Right ventricle myocardium inferior (tissue), 1 donor: ENCODE measurements at regions of chr6 and their contacts with region 1.

Region 1: GRCh38 chr6:14210663-14211561 is 93.3 kb downstream of the CD83 start:
- DNase-seq: peak; percentile 96
- ATAC-seq: peak; percentile 96

Region 2: DNA sequence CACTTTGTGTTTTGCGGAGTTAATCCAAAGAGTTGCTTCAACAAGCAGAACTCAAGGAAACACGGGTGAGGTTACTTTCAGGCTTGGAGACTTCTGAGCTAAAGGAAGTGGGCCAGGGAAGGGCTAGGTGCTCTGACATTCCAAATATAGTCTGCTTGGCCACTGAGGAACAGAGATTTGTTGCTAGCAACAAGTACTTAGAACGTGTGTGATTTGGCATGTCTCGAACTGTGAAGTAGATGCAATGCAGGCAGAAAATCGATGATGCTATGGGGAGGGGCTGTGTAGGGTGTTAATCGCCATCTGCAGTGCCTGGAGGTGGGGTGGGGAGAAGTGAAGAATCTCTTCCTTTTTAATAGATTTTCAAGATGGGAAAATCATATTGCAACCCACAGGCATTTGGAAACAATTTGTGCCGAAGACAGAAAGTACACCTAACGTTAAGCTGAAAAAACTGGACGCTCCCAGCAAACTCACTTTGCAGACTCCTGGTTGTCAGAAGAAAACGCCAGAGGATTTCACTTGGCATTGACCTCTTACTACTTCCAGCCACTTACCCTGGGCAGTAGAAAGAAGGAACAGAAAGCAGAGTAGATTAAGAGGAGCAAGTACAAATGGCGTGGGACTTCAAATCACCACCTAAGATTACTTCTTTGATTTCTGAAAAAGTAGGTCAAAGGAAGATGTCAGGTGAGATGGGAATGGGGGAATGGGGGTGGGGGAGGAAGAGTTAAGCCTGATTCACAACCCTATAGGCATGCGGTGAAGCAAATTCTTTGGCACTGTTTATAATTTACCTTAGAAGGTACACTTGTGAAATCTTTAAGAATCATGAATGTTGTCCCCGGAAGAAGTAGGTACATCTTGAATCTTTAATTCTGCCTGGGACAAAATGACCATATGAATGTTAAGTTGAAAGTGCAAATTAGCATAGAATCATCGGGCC is 220.7 kb after region 1 on chr6:
- intact Hi-C with region 1: loop called (anchors 2 kb)
- DNase-seq: no peak
- ATAC-seq: peak; percentile 91

Region 3: DNA sequence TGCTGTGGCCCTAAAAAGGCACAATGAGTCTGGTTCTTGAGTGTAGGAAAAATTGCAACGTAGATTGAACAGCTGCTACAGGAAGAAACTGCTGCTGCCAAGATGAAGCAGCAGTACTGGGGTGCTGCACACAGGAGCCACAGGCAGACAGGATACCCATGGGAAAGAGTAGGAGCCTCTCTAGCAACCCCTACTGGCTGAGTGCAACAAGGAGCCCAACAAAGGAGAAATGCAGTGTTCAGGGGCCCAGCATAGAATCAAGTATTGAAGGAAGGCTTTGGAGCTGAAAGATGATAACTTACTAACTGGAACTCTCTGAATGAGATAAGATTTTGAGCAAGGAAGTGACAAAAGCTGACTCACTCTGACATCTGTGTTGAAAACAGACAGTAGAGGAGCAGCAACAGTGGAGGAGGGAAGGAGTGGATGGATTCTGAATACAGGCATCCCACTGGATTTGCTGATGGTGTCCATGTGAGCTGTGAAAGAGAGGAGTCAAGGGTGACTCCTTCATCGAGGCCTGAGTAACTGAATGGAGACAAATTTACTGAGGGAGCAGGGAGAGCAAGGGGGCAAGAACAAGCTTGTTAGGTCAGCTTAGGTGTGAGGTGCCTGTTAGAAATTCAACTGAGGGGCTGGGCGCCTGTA is 500.3 kb after region 1 on chr6:
- intact Hi-C with region 1: loop called (anchors 5 kb)
- DNase-seq: no peak
- ATAC-seq: no peak

Region 4: DNA sequence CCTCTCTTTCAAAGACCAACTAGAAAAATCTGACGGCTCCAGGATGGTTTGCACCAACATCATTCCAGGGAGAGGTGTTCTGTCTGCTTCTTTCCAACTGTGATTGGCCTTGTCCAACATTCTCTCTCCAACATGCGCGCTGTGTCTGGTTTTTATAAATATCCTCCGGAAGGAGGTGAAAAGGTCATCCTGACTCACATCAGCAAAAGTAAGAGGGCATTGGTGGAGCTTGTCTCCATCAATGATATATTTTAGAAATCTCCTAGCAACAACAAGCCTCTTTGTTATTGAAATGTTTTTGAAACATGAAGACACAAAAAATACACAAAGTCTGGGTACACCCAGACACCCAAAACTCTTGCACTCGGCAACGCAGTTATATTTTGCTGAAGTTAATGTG is 559.7 kb after region 1 on chr6:
- intact Hi-C with region 1: no loop called
- DNase-seq: no peak
- ATAC-seq: peak; percentile 68

Region 5: DNA sequence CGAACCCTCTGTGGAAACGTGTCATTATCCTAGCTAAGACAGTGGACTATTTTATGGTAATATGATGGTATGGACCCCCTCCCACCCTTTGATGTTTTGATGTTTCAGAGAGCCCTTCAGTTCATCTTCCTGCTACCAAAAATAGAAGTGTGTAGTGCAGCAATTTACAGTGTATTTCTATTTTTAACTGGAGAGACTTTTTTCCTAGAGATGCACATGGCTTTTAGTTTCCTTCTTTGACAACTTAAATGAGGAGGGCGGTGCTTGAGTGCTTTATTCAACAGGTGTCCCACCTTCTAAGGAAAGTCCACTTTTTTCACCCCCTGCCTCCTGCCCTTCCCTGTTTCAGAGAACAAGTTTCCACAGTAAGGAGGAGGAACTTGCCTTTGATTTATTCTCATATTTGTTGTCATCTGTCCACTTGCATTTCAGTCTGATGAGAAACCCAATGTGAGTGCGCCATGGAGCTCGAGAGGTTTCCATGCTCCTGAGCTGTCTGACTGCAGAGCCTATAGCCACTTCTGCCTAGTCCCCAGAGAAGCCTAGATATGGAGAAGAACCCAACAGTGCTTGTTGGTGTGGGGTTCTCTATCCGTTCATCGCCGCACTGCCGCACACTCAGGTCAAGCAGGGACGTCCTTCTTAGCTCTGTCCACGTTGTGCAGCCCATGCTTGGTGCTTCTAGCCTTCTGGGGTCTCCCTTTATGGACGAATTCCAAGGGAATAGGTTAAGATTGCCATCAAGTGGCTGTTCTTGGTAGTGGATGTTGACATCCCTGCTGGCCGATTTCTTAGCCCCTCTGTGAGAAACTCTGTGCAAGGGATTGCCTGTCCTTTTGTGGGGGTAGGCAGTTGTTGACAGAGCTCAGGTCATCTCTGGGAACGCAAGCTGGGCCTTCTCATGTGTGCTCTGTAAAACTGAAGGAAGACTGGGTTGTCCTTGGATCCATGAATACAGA is 1179.1 kb after region 1 on chr6:
- intact Hi-C with region 1: loop called (anchors 10 kb)
- DNase-seq: no peak
- ATAC-seq: peak; percentile 29

Region 6: DNA sequence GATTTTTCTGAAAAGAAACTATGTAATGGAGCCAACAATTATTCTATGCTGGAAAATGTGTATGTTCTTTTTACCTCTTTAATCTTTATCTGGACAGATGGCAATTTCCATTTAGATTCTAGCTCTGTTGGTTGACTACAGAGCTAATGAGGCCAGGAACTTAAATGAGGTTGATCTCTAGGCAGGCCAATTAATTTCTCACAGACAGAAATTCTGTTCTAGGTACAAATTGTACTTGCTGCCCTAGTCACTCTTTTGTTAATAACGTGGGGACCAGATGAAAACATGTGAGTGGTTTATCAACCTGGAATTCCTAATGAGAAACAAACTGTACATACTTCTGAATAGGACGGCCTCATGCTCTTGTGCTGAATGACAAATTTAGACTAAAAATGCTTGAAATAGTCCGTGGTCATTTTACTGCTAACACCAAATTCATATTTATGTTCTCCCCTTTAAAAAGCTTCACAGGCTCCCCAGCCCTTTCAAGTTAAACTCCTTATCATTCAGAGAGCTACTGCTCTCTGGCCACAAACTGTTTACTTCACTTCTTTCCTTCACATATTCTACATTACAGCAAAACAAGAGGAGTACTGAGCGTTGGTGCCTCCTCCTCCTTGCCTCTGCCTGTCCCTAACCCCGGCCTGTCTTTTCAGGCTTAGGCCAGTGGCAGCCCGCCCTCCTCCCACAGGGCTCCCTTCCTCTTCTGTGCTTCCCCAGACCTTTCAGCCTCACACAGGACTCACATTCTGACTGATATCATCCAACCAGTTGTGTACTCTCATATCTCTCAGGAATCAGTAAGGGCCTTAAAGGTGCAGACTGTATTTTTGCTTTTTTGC is 1410.5 kb after region 1 on chr6:
- intact Hi-C with region 1: loop called (anchors 5 kb)
- DNase-seq: peak; percentile 84
- ATAC-seq: peak; percentile 84